Activated naive CD4-positive, alpha-beta T cell treated with anti-CD3 and anti-CD28 coated beads, Interleukin-2, amount 10 ng/mL, durations not matched to agents 7 days and 5 days (primary cell): ENCODE measurements at regions of chr20 and their contacts with region 1.

Region 1: GRCh38 chr20:59850018-59850641 is 83.3 kb downstream of the SYCP2 start:
- DNase-seq: no peak
- H3K4me3 Mint-ChIP-seq: no peak overlapping the region
- H3K27ac Mint-ChIP-seq: no peak overlapping the region
- H3K4me1 Mint-ChIP-seq: no peaks in the 10 kb centered on the region
- H3K27me3 Mint-ChIP-seq: no peaks in the 10 kb centered on the region

Region 2: DNA sequence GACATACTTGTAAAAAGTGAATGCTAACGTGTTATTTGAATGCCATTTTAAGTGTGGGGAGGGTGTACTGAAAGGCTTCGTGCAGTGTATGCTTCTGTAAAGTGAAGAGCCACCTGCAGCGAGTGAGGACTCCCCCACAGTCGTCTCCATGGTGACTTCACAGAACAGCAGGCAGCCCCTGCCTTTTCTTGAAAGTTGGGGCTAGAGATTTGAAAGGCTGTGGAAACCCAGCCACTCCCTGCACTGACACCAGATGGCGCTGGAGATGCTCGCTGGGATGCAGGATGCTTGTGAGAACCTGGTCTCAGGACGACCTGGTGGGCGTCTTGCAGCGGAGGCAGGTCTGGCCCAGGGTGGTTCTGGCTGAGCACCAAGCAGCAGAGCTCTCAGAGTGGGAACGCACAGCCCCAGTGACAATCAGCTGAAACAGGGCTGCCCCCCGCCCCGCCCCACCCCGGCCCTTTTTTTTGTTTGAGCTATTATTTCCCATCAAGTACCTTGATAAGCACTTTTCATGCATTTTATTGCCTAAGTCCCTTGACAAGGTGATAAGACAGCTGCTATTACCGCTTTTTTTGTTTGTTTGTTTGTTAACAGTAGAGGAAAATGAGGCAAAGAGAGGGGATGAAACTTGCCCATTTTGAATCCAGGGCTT is 67.0 kb before region 1 on chr20:
- CTCF ChIA-PET with region 1: interaction called, 21 read pairs
- DNase-seq: peak; percentile 64
- H3K4me3 Mint-ChIP-seq: no peak overlapping the region
- H3K27ac Mint-ChIP-seq: no peak overlapping the region
- H3K4me1 Mint-ChIP-seq: no peaks in the 10 kb centered on the region
- H3K27me3 Mint-ChIP-seq: peaks cover 5% of the 10 kb centered on the region

Region 3: DNA sequence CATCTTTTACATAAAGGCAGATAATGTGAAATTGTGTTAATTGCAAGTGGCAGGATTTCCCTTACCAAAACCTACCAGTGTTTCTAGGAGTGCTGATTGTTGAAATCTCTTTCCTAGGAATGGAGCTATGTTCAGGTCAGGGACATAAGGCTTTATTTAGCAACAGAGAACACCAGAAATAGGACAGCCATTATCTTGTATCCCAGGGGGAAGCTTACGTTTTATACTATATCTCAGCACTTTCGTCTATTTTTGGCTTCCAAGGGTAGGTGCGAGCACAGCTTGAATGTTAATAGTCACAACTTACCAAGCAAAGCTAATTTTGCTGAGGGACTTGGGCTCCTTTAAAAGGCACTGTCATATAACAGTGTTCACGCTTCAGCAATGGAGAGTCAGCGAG is 10.7 kb before region 1 on chr20:
- CTCF ChIA-PET with region 1: interaction called, 17 read pairs
- DNase-seq: no peak
- H3K4me3 Mint-ChIP-seq: no peak overlapping the region
- H3K27ac Mint-ChIP-seq: no peak overlapping the region
- H3K4me1 Mint-ChIP-seq: no peaks in the 10 kb centered on the region
- H3K27me3 Mint-ChIP-seq: peaks cover 25% of the 10 kb centered on the region